ENCODE measurements at regions of chr7 and their contacts with region 1.

Region 1: DNA sequence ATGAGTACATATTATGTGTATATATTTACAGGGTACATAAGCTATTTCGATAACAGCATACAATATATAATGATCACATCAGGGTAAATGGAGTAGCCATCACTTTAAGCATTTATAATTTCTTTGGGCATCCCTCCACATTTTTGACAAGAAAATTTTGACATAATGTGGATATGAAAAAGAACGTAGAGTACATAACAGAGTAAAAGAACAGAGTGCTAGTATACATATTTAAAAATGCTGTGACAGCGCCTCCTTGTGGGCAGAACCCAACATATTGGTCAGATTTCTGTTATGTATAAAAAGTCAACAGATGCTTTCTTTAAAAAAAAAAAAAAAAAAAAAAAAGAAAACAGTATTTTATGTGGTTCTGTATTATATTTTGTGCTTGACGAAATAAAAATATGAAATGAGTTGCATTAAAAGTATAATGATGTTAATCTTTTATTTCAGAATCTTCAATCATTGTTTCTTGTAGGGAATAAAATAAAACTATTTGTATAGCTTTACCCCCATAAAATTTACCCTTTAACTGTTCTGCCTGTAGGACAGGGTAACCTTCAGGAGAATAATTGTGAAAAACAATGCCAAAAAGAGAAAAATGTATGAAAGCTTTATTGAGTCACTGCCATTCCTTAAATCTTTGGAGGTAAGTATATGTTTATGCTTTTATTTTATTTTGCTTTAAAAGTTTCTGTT is 18.3 kb upstream of the HBP1 start:
- DNase-seq: peak; percentile 40
- ATAC-seq: peak; percentile 53; the same call in 1 of the 3 replicates
- H3K4me3 ChIP-seq: no peak overlapping the region
- H3K27ac ChIP-seq: no peak overlapping the region
- H3K4me1 ChIP-seq: no peaks in the 10 kb centered on the region
- H3K27me3 ChIP-seq: peaks cover 2 to 3% of the 10 kb centered on the region in 2 experiments; a peak in 3 of 5 replicates
- CTCF ChIP-seq: peak; percentile 59
- EP300 ChIP-seq: no peak
- POLR2A ChIP-seq: no peak
- RAD21 ChIP-seq: no peak

Region 2: GRCh38 chr7:106793015-106793975 is 357.2 kb before region 1 on chr7:
- CTCF ChIA-PET with region 1: interaction called, 15 read pairs
- POLR2A ChIA-PET with region 1: no interaction called
- in situ Hi-C with region 1: loop called (anchors 5 kb)
- intact Hi-C with region 1: loop called (anchors 1 kb)
- DNase-seq: peak; percentile 7
- ATAC-seq: no peak
- H3K4me3 ChIP-seq: no peak overlapping the region
- H3K27ac ChIP-seq: no peak overlapping the region
- H3K4me1 ChIP-seq: no peaks in the 10 kb centered on the region
- H3K27me3 ChIP-seq: no peaks in the 10 kb centered on the region; a peak in 1 of 5 replicates
- CTCF ChIP-seq: peak; percentile 60
- EP300 ChIP-seq: no peak
- POLR2A ChIP-seq: no peak
- RAD21 ChIP-seq: no peak

Region 3: GRCh38 chr7:106947244-106947728 is 203.2 kb before region 1 on chr7:
- CTCF ChIA-PET with region 1: interaction called, 13 read pairs
- POLR2A ChIA-PET with region 1: no interaction called
- in situ Hi-C with region 1: loop called (anchors 5 kb)
- intact Hi-C with region 1: loop called (anchors 1 kb)
- DNase-seq: peak; percentile 35
- ATAC-seq: peak; percentile 79
- H3K4me3 ChIP-seq: no peak overlapping the region
- H3K27ac ChIP-seq: no peak overlapping the region
- H3K4me1 ChIP-seq: no peaks in the 10 kb centered on the region
- H3K27me3 ChIP-seq: 0 out of 5 replicates have a peak, but pooled peaks cover 0 to 11% of the 10 kb centered on the region in 2 experiments
- CTCF ChIP-seq: peak; percentile 59
- EP300 ChIP-seq: no peak
- POLR2A ChIP-seq: no peak
- RAD21 ChIP-seq: no peak

Region 4: GRCh38 chr7:107446531-107446930 is 296.0 kb after region 1 on chr7:
- CTCF ChIA-PET with region 1: no interaction called
- POLR2A ChIA-PET with region 1: no interaction called
- in situ Hi-C with region 1: no loop called
- intact Hi-C with region 1: no loop called
- DNase-seq: no peak
- ATAC-seq: no peak
- H3K4me3 ChIP-seq: no peak overlapping the region
- H3K27ac ChIP-seq: no peak overlapping the region
- H3K4me1 ChIP-seq: no peaks in the 10 kb centered on the region
- H3K27me3 ChIP-seq: no peaks in the 10 kb centered on the region
- CTCF ChIP-seq: no peak
- EP300 ChIP-seq: no peak
- POLR2A ChIP-seq: no peak
- RAD21 ChIP-seq: no peak

Region 5: DNA sequence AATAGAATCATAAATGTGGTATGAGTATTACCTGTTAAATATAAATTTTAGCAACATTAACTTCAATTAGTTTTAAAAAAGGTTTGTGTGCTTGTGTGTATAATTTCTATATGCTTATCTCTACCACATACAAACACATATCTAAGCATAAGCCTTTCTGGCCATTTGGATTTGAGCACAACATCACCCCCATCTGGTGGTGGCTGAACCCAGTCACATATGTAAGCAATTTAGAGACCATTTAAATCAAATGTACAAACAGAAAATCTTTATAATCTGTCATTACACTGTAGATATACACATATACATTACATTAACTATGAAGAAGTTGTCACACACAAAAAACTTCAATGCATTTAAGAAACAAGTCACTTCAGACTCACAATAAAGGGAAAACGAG is 351.1 kb after region 1 on chr7:
- CTCF ChIA-PET with region 1: no interaction called
- POLR2A ChIA-PET with region 1: no interaction called
- in situ Hi-C with region 1: no loop called
- intact Hi-C with region 1: loop called (anchors 5 kb)
- DNase-seq: peak; percentile 36
- ATAC-seq: peak; percentile 54; the same call in 1 of the 3 replicates
- H3K4me3 ChIP-seq: no peak overlapping the region
- H3K27ac ChIP-seq: no peak overlapping the region
- H3K4me1 ChIP-seq: peaks cover 5% of the 10 kb centered on the region
- H3K27me3 ChIP-seq: no peaks in the 10 kb centered on the region
- CTCF ChIP-seq: peak; percentile 32
- EP300 ChIP-seq: no peak
- POLR2A ChIP-seq: no peak
- RAD21 ChIP-seq: no peak

Measured in HepG2 (cell line).